Heart left ventricle (tissue), 16 donors: ENCODE measurements at regions of chr10 and their contacts with region 1.

Region 1: DNA sequence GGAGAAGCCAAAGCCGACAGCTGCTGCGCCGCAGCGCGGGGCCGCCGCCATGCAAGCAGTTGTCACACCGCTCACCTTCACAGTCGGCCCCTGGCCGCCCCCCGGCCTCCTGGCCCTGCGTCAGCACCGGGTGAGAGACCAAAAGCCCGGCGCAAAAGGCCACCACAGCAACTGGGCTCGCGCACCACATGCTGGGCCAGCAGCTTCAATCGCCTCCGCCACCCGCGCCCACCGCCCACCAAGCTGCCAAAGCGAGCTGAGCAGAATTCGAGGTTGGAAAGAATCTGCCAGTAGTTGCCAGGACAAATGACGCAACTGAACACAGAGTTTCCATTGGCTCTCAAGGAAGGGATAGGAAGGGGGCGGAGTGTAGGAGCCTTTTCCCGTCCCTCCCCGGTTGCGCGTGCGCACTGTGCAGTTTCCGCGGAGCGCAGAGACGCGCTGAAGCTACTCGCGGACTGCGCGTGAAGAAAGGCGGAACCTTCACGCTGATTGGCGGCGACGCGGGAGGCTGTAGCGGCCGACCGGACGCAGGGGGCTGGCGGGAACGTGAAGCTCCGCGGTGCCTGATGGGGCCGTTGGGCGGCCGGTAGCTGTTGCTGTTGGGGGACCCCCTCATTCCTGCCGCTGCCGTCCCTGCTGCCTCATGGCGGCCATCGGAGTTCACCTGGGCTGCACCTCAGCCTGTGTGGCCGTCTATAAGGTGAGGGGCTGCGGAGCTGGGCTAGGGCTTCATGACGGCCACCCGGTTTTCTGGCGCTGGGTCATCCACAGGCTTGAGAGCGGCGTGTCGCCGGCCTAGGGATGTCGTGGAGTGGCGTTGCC is at the starts of genes CDNF, HSPA14 and MSANTD7:
- DNase-seq: peak; percentile 99 to 100 (median 100)
- ATAC-seq: peak; percentile 99
- H3K4me3 ChIP-seq: peak within 1 kb of the TSS; percentile 73 to 99 (median 94)
- H3K27ac ChIP-seq: peak within 1 kb of the TSS; percentile 94 to 99 (median 97)
- H3K4me1 ChIP-seq: peaks cover 5 to 26% (median 17%) of the 10 kb centered on the region in 12 donors
- H3K27me3 ChIP-seq: no peaks in the 10 kb centered on the region
- CTCF ChIP-seq: peak in 1 of 12 donors; percentile 12
- POLR2A ChIP-seq: peak; percentile 28 to 87
- total RNA-seq, gene CDNF: 1.7 to 5.4 (median 4.1) TPM
- total RNA-seq, gene HSPA14: 6.2 to 11.1 (median 8.3) TPM
- total RNA-seq, gene MSANTD7: 4.5 to 8.1 (median 5.6) TPM

Region 2: DNA sequence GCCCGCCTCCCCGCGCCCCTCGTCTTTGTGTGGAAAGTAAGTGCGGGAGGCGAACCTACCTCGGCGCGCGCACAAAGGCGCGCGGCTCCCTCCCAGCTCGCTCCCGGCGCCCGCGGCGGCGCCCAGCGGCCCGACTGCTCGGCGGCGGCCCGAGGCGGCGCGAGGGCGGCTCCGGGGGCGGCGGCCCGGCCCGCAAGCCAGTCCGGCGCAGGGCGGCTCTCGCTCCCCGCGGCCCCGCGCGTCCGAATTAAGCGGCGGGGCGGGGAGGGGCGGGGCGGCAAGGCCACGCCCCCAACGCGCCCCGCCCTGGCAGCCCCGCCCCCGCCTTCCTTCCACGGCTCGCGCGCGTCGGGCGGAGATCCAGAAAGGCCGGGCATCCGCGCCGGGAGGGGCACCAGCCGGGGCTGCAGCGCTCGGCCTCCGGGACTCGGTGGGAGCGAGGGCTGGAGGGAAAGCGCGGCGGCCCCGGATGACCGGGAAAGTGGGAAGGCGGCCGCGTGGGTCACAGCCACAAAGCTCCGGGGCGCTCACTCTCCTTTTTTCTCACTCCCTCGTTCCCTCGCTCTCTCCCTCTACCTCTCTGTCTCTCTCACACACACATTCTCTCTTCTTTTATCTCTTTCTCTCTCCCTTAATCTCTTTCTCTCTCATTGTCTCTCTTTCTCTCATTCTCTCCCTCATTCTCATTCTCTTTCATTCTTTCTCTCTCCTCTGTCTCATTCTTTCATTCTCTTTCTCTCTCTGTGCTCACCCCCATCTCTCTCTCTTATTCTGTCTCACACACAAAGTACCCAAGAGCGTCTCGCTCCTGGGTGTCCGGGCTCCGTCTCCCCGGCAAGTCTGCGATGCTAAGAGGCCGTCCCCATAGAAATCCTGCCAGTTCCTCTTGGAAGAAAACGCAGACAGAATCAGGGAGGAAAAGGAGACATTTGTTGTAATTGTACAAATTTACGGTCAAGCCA is 233.5 kb before region 1 on chr10:
- intact Hi-C with region 1: loop called in 2 of 10 experiments (anchors 5 to 10 kb)
- DNase-seq: peak; percentile 80 to 93 (median 88)
- ATAC-seq: peak; percentile 76 to 97 (median 94)
- H3K4me3 ChIP-seq: peak overlapping the region; percentile 39 to 78 (median 65)
- H3K27ac ChIP-seq: peak overlapping the region in 10 of 12 donors; percentile 37 to 83 (median 70)
- H3K4me1 ChIP-seq: peaks cover 0 to 45% (median 14%) of the 10 kb centered on the region in 12 donors
- H3K27me3 ChIP-seq: no peaks in the 10 kb centered on the region
- CTCF ChIP-seq: no peak
- POLR2A ChIP-seq: peak in 1 of 2 donors; percentile 64

Region 3: DNA sequence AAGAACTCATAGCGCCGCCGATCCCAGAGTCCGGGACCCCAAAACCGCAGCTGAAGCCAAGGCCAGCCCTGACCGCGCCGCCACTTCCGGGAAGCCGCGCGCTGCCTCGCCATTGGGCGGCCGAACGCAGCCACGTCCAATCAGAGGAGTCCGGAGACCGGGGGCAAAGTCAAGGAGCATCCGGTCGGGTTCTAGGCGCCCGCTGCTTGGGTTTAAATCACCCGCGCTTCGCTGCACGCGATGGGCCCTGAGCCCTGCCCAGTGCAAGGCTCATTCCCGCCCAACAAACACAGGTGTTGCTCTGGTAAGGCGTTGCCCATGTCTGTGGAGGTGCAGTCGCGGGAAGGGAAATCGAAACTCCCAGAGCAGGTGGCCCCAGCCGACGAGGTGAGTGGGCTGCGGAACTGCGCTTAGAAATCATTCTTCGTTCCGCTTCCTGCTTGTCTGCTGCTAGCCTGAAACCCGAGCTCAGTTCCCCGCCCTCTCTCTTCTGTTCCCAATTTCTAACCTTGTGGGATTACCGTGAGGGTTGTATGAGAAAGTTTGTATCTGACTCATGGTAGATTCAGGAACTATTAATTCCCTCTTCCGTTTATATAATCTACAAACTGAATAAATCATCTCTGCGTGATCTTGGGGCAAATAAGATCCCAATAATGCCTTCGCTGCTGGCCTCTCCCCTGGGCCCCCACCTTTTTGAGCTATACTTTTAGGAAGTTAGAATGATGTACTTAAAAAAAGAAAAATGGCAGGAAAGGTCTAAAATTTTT is 116.2 kb after region 1 on chr10 and contains the start of gene DCLRE1C:
- intact Hi-C with region 1: loop called in 4 of 10 experiments (anchors 5 to 10 kb)
- DNase-seq: peak; percentile 90 to 94 (median 92)
- ATAC-seq: peak; percentile 96 to 99 (median 98)
- H3K4me3 ChIP-seq: peak within 1 kb of the TSS; percentile 69 to 95 (median 80)
- H3K27ac ChIP-seq: peak within 1 kb of the TSS; percentile 33 to 91 (median 85)
- H3K4me1 ChIP-seq: peaks cover 0 to 37% (median 18%) of the 10 kb centered on the region in 12 donors
- H3K27me3 ChIP-seq: no peaks in the 10 kb centered on the region
- CTCF ChIP-seq: peak in 1 of 12 donors; percentile 6
- POLR2A ChIP-seq: peak in 1 of 2 donors; percentile 40
- total RNA-seq, gene DCLRE1C: 2.5 to 9.6 (median 5.3) TPM